SK-N-SH (cell line): ENCODE measurements at regions of chr2 and their contacts with region 1.

Region 1: DNA sequence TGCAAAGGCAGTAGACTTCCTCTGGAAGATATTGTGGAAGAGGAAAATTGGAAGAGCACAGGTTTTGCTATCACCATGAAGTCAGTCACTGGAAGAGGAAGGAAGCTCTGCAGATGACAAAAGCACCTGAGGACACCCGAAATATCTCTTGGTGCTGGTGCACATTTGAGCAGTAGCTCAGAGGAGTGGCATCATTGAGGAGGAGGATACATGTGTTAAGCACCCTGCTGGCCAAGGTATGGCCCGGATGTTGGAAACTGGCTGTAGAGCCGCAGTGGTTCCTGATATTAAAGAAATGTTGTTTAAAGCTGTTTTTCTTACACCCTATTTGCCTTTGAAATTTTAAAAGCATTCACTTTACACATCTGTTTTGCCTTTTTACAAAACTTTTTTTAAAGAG is 32.7 kb upstream of the SCYGR2 start:
- DNase-seq: no peak
- H3K4me3 ChIP-seq: no peak overlapping the region
- H3K27ac ChIP-seq: no peak overlapping the region
- H3K4me1 ChIP-seq: no peaks in the 10 kb centered on the region
- H3K27me3 ChIP-seq: no peaks in the 10 kb centered on the region
- CTCF ChIP-seq: no peak
- EP300 ChIP-seq: no peak
- RAD21 ChIP-seq: no peak

Region 2: DNA sequence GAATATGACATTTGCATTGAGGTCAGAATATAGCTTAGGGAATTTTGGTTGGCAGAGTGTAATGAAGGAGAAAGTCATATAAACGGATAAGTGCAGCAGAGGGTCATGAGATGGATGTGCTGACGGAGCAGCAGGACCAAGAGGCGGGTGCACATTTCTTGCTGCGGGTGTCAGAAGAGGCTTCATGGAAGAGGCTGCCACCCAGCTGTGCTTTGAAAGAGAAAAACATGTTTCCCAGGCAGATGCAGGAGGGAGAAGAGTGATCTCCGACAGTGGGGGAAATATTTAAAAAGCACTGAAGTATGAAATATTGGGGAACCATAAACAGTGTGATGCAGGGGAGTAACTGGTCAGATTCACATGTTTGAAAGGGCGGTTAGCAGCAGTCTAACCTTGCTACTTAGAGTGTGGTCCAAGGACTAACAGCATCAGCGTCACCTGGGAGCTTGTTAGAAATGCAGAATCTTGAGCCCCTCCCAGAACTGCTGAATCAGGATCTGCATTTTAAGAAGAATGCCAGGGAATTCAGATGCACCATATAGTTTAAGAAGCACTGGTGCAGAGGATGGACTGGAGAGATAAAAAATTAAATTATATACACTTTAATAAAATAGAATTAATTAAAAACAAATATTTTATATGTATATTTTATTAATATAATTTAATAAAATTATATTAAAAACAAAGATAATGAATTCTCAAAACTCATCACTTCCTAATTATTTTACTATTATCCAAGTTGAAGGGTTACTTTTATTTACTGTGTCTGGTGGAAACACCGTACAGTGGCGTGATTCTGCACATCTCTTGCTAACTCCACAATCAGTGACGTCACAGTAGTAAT is 142.1 kb before region 1 on chr2:
- CTCF ChIA-PET with region 1: no interaction called
- POLR2A ChIA-PET with region 1: no interaction called
- DNase-seq: no peak
- H3K4me3 ChIP-seq: no peak overlapping the region
- H3K27ac ChIP-seq: no peak overlapping the region
- H3K4me1 ChIP-seq: no peaks in the 10 kb centered on the region
- H3K27me3 ChIP-seq: no peaks in the 10 kb centered on the region
- CTCF ChIP-seq: no peak
- EP300 ChIP-seq: no peak
- RAD21 ChIP-seq: no peak

Region 3: DNA sequence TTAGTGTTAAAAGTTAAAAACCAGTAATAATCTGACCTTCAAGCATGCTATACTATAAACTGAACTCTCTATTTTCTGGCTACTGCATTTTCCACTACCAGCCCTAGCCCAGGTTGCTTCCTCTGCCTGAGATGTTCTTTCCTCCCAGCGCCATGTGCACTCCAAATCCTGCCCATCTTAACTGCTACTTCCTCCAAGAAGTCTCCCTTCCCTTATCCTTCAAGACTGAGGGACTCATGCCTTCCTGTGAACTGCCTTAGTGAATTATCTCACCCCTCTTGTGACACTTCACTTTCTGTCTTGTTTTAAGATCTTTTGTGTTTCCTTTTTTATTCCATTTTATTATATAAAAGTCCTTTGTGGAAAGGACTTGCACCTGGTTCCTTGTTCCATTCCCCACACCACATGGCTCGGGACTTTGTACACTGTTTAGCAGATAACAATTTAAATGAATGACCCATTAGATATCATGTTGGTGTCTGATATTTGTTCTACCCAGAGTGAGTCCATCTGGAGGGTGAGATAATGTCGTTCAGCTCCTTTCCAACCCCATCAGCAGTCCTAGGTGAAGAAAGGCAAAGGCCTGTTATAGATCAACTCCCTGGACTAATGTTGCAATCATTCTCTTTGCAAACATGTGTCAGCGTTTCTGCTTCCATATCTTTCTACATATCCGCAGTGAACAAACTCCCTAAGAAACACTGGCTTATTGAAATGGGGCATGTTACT is 114.9 kb before region 1 on chr2:
- CTCF ChIA-PET with region 1: no interaction called
- POLR2A ChIA-PET with region 1: no interaction called
- DNase-seq: peak; percentile 76
- H3K4me3 ChIP-seq: no peak overlapping the region
- H3K27ac ChIP-seq: peak overlapping the region in 1 of 2 experiments; percentile 60; a peak in 2 of 4 replicates
- H3K4me1 ChIP-seq: peaks cover 5 to 11% of the 10 kb centered on the region in 2 experiments; a peak in 3 of 4 replicates
- H3K27me3 ChIP-seq: no peaks in the 10 kb centered on the region
- CTCF ChIP-seq: no peak
- EP300 ChIP-seq: peak in 1 of 2 experiments; percentile 90; a peak in 2 of 4 replicates
- RAD21 ChIP-seq: no peak; the same call in 1 of the 2 replicates

Region 4: GRCh38 chr2:227551836-227552235 is 14.2 kb before region 1 on chr2:
- CTCF ChIA-PET with region 1: interaction called, 16 read pairs
- POLR2A ChIA-PET with region 1: no interaction called
- DNase-seq: no peak
- H3K4me3 ChIP-seq: no peak overlapping the region
- H3K27ac ChIP-seq: no peak overlapping the region
- H3K4me1 ChIP-seq: no peaks in the 10 kb centered on the region
- H3K27me3 ChIP-seq: no peaks in the 10 kb centered on the region
- CTCF ChIP-seq: no peak
- EP300 ChIP-seq: no peak
- RAD21 ChIP-seq: no peak